ENCODE measurements at regions of chr18 and their contacts with region 1.

Region 1: GRCh38 chr18:32425466-32425865 is 45.2 kb downstream of the GAREM1 start:
- DNase-seq: no peak
- ATAC-seq: peak in 1 of 4 donors; percentile 50
- H3K4me3 ChIP-seq: no peak overlapping the region
- H3K27ac ChIP-seq: peak overlapping the region in 9 of 12 donors; percentile 18 to 64 (median 47)
- H3K4me1 ChIP-seq: peaks cover 0 to 83% (median 29%) of the 10 kb centered on the region in 12 donors
- H3K27me3 ChIP-seq: no peaks in the 10 kb centered on the region
- CTCF ChIP-seq: no peak
- POLR2A ChIP-seq: no peak

Region 2: DNA sequence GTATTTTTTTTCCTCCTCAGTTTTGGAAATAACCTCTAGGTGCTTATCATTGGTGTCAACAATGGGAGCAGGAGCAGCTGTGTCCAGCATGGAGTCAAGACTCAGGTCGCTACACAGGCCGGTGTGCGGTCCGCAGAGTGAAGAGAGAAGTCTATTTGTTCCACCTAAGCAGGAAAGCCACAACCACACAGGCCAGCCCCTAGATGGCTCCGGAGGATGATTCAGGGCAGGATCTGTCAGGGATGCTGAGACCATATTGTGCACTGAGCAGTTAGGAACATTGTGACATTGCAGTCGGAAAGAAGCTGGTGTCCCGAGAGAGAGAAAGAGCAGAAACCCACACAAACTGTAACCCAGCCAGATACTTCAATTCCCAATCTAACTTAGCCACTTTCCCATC is 91.7 kb before region 1 on chr18:
- intact Hi-C with region 1: no loop called
- DNase-seq: peak in 2 of 5 donors; percentile 15 to 35
- ATAC-seq: peak in 3 of 4 donors; percentile 70 to 76 (median 72)
- H3K4me3 ChIP-seq: no peak overlapping the region
- H3K27ac ChIP-seq: no peak overlapping the region
- H3K4me1 ChIP-seq: peaks cover 0 to 32% (median 5%) of the 10 kb centered on the region in 12 donors
- H3K27me3 ChIP-seq: no peaks in the 10 kb centered on the region
- CTCF ChIP-seq: peak in 5 of 12 donors; percentile 7 to 37 (median 22)
- POLR2A ChIP-seq: no peak

Region 3: DNA sequence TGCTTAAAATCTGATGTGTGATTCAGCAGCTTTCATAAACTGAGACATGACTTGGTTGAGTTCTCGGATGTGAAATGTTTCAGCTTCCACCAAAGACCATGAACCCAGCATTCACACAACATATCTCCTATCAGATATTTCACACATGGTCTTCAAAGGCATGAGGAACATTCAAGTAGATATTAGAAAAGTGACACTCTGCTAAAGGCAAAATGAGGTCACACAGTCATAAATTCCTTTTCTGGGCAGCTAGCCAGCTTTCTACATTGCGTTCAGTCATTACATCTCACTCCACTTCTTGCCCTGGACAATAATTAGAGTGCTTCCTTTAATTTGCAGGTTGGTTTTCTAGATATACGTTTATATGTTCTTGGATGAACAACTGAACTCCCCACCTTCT is 51.5 kb before region 1 on chr18:
- intact Hi-C with region 1: loop called in 1 of 10 experiments (anchors 10 kb)
- DNase-seq: peak in 1 of 5 donors; percentile 30
- ATAC-seq: peak in 2 of 4 donors; percentile 34 to 55
- H3K4me3 ChIP-seq: no peak overlapping the region
- H3K27ac ChIP-seq: peak overlapping the region in 4 of 12 donors; percentile 11 to 31 (median 17)
- H3K4me1 ChIP-seq: peaks cover 4 to 53% (median 15%) of the 10 kb centered on the region in 12 donors
- H3K27me3 ChIP-seq: no peaks in the 10 kb centered on the region
- CTCF ChIP-seq: no peak
- POLR2A ChIP-seq: no peak

Region 4: DNA sequence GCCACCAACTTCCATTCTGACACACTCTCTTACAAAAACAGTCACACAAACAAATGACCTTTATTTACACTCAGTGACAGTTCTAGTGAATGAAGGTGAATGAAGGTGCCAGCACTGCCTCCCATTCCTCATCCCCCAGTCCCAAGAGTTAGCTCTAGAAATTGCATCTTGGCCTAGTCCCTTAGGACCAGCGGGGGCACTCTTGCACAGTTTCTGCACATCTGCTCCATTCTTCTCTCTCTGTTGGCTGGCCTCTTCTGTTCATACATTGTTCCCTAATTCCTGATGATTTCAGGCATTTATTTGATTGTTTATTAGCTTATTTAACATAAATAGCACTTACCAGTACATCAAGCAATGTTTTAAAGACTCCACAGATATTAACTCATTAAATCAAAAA is 14.3 kb after region 1 on chr18:
- intact Hi-C with region 1: loop called in 1 of 10 experiments (anchors 1 kb)
- DNase-seq: peak in 1 of 5 donors; percentile 21
- ATAC-seq: no peak
- H3K4me3 ChIP-seq: no peak overlapping the region
- H3K27ac ChIP-seq: no peak overlapping the region
- H3K4me1 ChIP-seq: peaks cover 0 to 76% (median 21%) of the 10 kb centered on the region in 12 donors
- H3K27me3 ChIP-seq: no peaks in the 10 kb centered on the region
- CTCF ChIP-seq: peak in 4 of 12 donors; percentile 15 to 38 (median 22)
- POLR2A ChIP-seq: no peak